Activated CD8-positive, alpha-beta T cell treated with anti-CD3 and anti-CD28 coated beads, Interleukin-2, amount 10 ng/mL, durations not matched to agents 7 days and 5 days (primary cell): ENCODE measurements at regions of chr10 and their contacts with region 1.

Region 1: GRCh38 chr10:6171881-6172695 is 30.6 kb upstream of the PFKFB3 start:
- DNase-seq: no peak
- ATAC-seq: no peak
- H3K4me3 Mint-ChIP-seq: no peak overlapping the region
- H3K27ac Mint-ChIP-seq: peak overlapping the region; percentile 75
- H3K4me1 Mint-ChIP-seq: peaks cover 71% of the 10 kb centered on the region
- H3K27me3 Mint-ChIP-seq: no peaks in the 10 kb centered on the region

Region 2: DNA sequence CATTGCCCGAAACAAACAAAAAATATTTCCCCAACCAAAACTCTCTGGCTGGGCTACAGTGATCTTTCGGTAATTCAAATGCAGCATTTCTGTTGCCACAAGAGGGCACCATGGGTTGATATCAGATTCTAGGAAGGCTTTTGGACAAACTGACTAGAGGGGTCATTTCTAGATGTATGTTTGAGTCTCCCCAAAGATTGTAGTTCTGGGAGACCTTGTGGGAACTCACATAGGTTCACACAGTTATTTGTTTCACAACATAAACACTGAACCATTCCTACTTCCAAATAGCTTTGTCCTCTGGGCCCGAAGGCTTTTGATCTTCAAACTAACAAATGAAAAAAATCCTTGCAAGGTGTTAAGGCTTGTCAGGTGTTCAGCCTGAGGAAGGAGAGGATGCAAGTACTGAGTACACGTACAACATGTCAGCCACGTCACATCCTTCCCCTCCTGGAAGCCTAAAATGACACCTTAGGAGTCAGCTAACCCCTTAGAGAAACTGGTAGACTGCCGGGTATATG is 157.8 kb before region 1 on chr10:
- CTCF ChIA-PET with region 1: no interaction called
- POLR2A ChIA-PET with region 1: no interaction called
- DNase-seq: peak; percentile 78
- ATAC-seq: peak; percentile 81
- H3K4me3 Mint-ChIP-seq: peak overlapping the region; percentile 19
- H3K27ac Mint-ChIP-seq: peak overlapping the region; percentile 97
- H3K4me1 Mint-ChIP-seq: peaks cover 48% of the 10 kb centered on the region
- H3K27me3 Mint-ChIP-seq: no peaks in the 10 kb centered on the region

Region 3: GRCh38 chr10:6077071-6077675 is 94.9 kb before region 1 on chr10:
- CTCF ChIA-PET with region 1: no interaction called
- POLR2A ChIA-PET with region 1: no interaction called
- DNase-seq: no peak
- ATAC-seq: no peak
- H3K4me3 Mint-ChIP-seq: no peak overlapping the region
- H3K27ac Mint-ChIP-seq: no peak overlapping the region
- H3K4me1 Mint-ChIP-seq: peaks cover 47% of the 10 kb centered on the region
- H3K27me3 Mint-ChIP-seq: no peaks in the 10 kb centered on the region

Region 4: DNA sequence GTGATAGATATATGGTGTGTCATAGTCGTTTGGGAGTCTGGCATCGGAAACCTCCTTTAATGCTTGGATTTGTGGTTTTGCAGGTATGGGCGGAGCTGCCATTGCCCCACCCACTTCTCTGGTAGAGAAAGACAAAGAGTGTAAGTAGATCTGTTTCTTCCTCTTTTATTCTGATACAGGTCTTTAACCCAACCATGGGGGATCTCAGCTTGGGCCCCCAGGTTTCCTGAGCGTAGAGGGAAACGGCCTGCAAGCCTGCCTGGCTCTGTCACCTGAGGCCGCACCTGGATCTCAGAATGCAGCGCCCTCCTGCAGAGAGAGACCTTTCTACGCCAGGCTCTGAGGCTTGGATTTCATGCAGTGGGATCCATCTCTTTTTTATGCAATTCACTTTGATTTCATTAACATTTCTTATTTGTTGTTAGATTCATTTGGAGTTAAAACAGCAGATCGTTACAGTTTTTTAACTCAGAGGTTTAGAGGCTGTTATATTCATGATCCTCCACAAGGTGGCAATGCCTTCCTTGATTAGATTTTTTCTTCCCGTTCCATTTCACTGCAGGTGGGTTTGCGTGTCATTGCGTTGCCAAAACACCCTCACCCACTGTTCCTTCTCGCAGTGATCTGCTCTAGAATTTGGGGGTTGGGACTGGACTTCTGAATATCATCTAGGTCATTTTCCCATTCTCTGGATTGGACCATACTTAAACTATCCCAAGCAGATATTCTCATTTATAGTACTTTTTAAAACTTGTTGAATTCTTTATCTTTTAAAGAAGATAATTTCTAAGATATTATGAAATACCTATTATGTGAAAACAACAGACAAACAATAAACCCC is 63.3 kb before region 1 on chr10:
- CTCF ChIA-PET with region 1: interaction called, 10 read pairs
- POLR2A ChIA-PET with region 1: no interaction called
- DNase-seq: peak; percentile 52
- ATAC-seq: peak; percentile 54
- H3K4me3 Mint-ChIP-seq: no peak overlapping the region
- H3K27ac Mint-ChIP-seq: peak overlapping the region; percentile 81
- H3K4me1 Mint-ChIP-seq: peaks cover 38% of the 10 kb centered on the region
- H3K27me3 Mint-ChIP-seq: no peaks in the 10 kb centered on the region

Region 5: DNA sequence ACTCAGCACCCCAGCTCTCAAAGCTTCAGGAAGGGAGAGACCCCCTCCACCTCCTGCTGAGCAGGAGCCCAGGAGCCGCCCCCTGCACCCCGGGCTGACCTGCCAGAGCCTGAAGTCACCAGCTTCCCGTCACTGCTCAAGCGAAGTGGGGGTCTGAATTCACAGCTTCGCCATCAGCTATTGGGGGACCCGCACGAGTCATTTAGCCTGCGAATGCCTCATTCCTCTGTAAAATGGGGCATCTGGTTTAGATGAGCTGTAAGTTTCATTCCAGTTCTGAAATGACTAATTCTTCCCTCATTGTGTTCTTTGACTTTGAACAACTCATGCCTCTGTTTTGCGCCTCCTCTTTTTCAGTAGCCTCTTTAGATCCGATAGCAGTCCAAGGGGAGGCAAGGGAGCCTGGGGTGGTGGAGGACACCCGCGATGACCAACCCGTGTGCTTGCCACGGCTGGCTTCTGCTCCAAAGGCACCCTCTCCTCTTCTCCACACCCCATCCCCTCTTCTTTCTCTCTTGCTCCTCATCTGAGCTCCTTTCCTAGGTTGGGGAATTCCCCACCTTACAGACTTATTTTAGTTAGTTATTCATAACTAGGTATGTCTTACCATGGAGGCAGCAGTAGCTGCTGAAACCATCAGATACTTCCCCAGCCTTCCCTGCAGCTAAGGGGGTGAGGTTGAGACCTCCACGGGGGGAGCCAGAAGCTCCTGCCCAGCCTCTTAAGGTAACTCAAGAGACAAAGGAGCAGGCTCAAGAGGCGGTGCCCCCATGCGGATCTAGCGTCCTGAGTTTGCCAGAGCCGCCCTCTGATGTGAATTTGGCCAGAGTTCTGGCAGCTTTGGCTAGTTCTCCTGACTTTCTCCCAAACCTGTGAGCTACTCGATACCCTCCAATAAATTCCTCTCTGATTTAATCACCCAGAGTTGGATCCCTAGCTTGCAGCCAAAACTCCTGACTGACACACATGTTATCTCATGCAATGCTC is 35.6 kb before region 1 on chr10:
- CTCF ChIA-PET with region 1: interaction called, 11 read pairs
- POLR2A ChIA-PET with region 1: no interaction called
- DNase-seq: no peak
- ATAC-seq: peak; percentile 35
- H3K4me3 Mint-ChIP-seq: no peak overlapping the region
- H3K27ac Mint-ChIP-seq: no peak overlapping the region
- H3K4me1 Mint-ChIP-seq: peaks cover 44% of the 10 kb centered on the region
- H3K27me3 Mint-ChIP-seq: peaks cover 3% of the 10 kb centered on the region

Region 6: DNA sequence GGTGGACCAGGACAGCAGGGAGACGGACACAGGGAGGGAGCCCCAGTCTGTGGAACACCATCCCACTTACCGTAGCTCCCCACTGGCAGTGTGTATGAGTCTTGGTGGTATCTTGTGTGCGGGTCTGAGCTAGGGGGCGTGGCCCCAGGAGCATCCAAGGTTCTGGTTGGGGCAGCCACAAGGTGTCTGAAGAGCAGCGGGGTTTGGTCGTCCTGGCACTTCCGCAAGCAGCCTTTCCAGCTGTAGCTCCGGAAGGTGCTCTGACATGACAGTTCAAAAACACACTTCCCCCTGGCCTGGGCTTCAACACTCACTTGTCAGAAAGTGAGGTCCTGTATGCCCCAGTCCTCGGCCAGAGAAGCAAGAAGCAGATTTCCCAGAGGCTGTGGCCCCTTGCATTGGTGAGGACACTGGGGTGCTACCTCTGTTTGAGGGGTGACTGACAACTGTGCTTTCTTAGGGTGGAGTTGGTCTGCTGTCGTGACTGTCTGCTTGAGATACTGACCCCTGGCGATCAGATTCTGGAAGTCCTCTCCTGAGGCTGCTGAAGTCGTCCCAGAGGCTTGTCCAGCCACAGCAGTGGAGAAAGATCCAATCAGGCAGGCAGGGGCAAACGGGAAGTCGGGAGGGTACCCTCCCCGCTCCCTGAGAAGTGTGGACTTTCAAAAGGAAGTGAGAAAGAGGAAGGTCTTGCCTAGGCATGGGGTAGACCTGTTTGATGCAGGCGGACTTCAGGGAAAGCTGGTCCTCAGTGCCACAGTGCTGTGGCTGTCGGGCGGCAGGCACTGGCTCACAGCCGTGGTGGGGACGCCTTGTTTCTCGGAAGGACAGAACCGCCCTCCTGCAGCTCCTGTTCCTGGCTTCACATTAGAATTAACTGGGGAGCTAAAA is 20.8 kb before region 1 on chr10:
- CTCF ChIA-PET with region 1: interaction called, 28 read pairs
- POLR2A ChIA-PET with region 1: no interaction called
- DNase-seq: peak; percentile 73
- ATAC-seq: peak; percentile 84
- H3K4me3 Mint-ChIP-seq: peak overlapping the region; percentile 67
- H3K27ac Mint-ChIP-seq: peak overlapping the region; percentile 86
- H3K4me1 Mint-ChIP-seq: peaks cover 62% of the 10 kb centered on the region
- H3K27me3 Mint-ChIP-seq: no peaks in the 10 kb centered on the region

Region 7: DNA sequence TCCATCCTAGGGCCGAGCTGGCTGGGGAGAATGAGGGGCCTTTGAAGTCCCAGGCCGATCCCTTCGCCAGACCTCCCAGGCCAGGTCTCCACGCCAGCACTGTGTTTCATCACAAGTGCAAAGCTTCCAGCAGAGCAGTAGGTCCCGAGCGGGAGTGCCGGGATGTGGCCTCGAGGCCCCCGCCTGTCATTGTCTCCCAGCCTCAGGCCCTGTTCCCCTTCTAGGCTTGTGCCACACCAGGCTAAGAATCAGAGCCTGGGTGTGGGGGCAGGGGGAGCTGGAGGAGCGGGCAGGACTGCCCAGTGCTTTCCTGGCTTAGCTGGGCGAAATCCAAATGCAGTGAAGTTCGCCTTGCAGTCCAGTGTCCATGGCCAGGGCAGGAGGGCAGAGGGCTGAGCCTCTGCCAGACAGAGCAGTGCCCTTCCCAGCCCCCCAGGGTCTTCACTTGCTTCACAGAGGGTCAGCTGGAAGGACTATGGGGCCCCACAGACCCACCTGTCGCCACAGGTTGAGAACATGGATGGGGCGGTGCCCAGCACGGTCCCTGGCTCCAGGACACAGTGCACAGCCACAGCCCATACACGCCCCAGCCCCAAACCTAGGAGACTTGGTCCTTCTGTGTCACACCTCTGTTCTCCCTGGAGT is 10.5 kb after region 1 on chr10:
- CTCF ChIA-PET with region 1: interaction called, 27 read pairs
- POLR2A ChIA-PET with region 1: no interaction called
- DNase-seq: no peak
- ATAC-seq: no peak
- H3K4me3 Mint-ChIP-seq: no peak overlapping the region
- H3K27ac Mint-ChIP-seq: no peak overlapping the region
- H3K4me1 Mint-ChIP-seq: peaks cover 22% of the 10 kb centered on the region
- H3K27me3 Mint-ChIP-seq: no peaks in the 10 kb centered on the region

Region 8: GRCh38 chr10:6328699-6329423 is 156.8 kb after region 1 on chr10:
- CTCF ChIA-PET with region 1: no interaction called
- POLR2A ChIA-PET with region 1: no interaction called
- DNase-seq: no peak
- ATAC-seq: no peak
- H3K4me3 Mint-ChIP-seq: no peak overlapping the region
- H3K27ac Mint-ChIP-seq: no peak overlapping the region
- H3K4me1 Mint-ChIP-seq: no peaks in the 10 kb centered on the region
- H3K27me3 Mint-ChIP-seq: no peaks in the 10 kb centered on the region

Region 9: DNA sequence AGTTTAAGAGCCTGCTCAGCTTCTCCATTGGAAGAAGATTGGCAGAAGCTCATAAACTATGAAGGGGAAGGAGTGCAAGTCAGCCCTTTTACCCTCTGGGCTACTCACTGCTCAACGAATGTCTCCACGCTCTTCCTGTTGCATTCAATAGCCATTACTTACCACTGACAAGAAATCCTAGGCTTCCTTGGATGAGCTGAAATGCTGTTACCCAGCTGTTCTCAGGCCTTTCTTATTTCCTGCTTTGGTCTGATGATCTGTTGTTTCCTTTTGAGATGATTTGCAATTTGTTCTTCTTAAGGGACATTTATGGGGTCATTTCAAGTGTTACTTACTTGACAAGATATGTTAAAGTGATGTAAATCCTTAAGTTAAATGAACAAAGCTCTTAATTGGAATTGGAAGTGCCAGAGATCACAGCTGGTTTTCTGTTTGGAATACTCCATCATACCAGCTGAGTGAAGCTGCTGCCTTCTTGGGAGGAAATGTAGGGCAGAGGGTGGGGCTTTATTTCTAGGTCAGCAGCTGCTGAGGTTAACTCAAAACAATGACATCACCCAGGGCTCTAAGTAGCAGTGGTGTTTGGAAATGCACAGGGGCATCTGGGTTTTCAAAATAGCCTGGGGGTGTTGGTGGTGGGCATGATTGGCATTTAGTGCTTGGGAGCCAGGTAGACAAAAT is 238.0 kb after region 1 on chr10:
- CTCF ChIA-PET with region 1: interaction called, 32 read pairs
- POLR2A ChIA-PET with region 1: no interaction called
- DNase-seq: peak; percentile 73
- ATAC-seq: peak; percentile 90
- H3K4me3 Mint-ChIP-seq: peak overlapping the region; percentile 63
- H3K27ac Mint-ChIP-seq: peak overlapping the region; percentile 83
- H3K4me1 Mint-ChIP-seq: peaks cover 45% of the 10 kb centered on the region
- H3K27me3 Mint-ChIP-seq: no peaks in the 10 kb centered on the region